Esophagus muscularis mucosa (tissue), 4 donors: ENCODE measurements at regions of chr4 and their contacts with region 1.

Region 1: GRCh38 chr4:124262211-124263179 is 450.0 kb downstream of the ANKRD50 start:
- DNase-seq: no peak
- H3K4me3 ChIP-seq: no peak overlapping the region
- H3K27ac ChIP-seq: no peak overlapping the region
- H3K4me1 ChIP-seq: peaks cover 0 to 7% (median 0%) of the 10 kb centered on the region in 4 donors
- H3K27me3 ChIP-seq: no peaks in the 10 kb centered on the region
- CTCF ChIP-seq: peak; percentile 76 to 87 (median 78)
- EP300 ChIP-seq: no peak
- POLR2A ChIP-seq: no peak

Region 2: DNA sequence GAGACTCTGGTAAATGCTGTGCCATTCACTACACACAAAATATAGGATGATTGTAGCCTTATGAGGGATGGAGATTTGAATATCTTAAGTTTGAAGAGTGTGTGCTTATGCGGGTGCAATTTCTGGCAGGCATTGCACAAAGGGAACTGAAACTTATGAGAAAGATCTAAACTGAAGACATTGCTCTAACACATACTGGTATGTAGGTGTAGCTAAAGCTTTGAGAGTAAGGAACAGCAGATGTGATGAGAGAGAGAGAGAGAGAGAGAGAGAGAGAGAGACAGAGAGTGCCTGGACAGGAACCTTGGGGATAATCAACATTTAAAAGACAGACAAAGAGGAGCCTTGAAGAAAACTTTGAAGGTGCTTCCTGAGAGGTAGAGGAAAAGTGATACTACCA is 486.2 kb before region 1 on chr4:
- intact Hi-C with region 1: loop called (anchors 10 kb)
- DNase-seq: no peak
- H3K4me3 ChIP-seq: no peak overlapping the region
- H3K27ac ChIP-seq: peak overlapping the region in 1 of 4 donors; percentile 30
- H3K4me1 ChIP-seq: peaks cover 0 to 15% (median 5%) of the 10 kb centered on the region in 4 donors
- H3K27me3 ChIP-seq: no peaks in the 10 kb centered on the region
- CTCF ChIP-seq: no peak
- EP300 ChIP-seq: no peak
- POLR2A ChIP-seq: no peak